Left ventricle myocardium inferior (tissue), 1 donor: ENCODE measurements at regions of chr3 and their contacts with region 1.

Region 1: GRCh38 chr3:132253262-132253878 is 63.8 kb upstream of the ACP3 start:
- DNase-seq: no peak
- H3K4me3 ChIP-seq: no peak overlapping the region
- H3K27ac ChIP-seq: no peak overlapping the region
- H3K4me1 ChIP-seq: no peaks in the 10 kb centered on the region
- H3K27me3 ChIP-seq: peaks cover 21% of the 10 kb centered on the region
- CTCF ChIP-seq: peak; percentile 79

Region 2: DNA sequence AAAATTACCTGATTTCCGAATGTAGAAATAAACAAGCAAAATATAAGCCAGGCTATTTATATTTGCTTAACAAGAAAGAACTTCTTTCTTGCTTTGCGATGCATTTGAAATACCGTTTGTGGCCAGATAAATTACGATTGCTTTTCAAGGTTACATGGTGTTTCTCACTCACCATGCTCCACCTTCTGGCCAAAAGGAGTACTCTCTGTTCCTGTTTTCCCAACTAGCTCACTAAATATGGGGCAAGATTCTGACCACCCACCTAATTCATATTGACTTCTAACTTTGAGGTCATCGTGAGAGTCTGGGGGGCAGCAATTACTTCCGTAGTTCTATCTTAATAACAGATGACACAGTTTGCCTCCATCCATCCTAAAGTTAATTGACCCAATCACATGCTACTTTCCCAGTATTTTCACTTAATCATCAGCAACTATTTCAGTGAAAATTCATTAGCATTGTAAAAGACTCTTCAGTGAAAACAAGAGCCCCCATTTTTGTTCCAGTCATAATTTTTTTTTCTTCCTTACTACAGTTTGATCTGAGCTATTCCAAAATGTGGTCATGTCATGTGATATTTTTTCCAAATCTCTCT is 89.7 kb after region 1 on chr3:
- intact Hi-C with region 1: loop called (anchors 5 kb)
- DNase-seq: no peak
- H3K4me3 ChIP-seq: no peak overlapping the region
- H3K27ac ChIP-seq: no peak overlapping the region
- H3K4me1 ChIP-seq: peaks cover 19% of the 10 kb centered on the region
- H3K27me3 ChIP-seq: peaks cover 7% of the 10 kb centered on the region
- CTCF ChIP-seq: peak; percentile 86